ENCODE measurements at regions of chr3 and their contacts with region 1.

Region 1: DNA sequence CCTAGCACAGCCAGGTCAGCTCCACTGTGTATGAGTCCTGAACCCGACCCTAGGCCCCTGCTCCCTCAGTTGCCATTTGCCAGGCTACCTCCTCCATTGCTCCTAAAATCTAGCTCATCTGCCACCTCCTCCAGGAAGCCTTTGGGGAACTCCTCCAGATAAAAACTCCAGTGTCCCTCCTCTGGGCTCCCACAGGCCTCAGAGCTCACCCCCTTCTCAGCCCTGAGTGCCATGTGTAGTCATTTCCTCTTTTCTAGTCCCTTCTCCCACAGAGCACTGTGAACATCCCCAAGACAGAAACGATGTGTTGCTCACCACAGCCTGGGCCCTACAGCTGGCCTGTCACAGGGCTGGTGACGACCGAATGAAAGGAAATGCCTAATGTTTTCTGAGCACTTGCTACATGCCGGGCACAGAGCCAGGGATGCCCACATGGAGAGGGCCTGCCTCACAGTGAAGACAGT is 61.0 kb downstream of the IQSEC1 start:
- DNase-seq: peak; percentile 77
- H3K4me3 ChIP-seq: peak overlapping the region; percentile 6
- H3K27ac ChIP-seq: peak overlapping the region; percentile 97
- H3K4me1 ChIP-seq: peaks cover 99% of the 10 kb centered on the region
- CTCF ChIP-seq: no peak

Region 2: DNA sequence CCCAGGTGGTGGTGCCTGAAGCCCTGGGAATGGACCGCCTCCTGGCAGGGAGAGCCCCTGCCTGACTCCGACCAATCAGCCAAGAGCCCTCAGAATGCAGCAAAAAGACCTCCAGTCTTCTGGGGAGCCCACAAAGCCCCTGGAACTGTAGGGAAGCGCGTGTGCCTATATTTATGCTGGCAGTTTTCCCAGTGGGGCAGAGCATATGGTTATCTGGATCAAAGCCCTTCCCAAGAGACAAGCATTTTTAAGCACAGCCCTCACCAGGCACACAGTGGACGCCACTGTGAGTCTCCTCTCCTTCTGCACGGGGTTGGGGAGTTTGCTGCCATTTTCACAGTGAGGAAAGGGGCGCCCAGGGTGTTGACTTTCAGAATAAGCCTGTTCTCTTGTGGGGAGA is 90.0 kb before region 1 on chr3:
- CTCF ChIA-PET with region 1: no interaction called
- POLR2A ChIA-PET with region 1: no interaction called
- intact Hi-C with region 1: no loop called
- DNase-seq: no peak
- H3K4me3 ChIP-seq: no peak overlapping the region
- H3K27ac ChIP-seq: no peak overlapping the region
- H3K4me1 ChIP-seq: peaks cover 16% of the 10 kb centered on the region
- CTCF ChIP-seq: no peak

Region 3: DNA sequence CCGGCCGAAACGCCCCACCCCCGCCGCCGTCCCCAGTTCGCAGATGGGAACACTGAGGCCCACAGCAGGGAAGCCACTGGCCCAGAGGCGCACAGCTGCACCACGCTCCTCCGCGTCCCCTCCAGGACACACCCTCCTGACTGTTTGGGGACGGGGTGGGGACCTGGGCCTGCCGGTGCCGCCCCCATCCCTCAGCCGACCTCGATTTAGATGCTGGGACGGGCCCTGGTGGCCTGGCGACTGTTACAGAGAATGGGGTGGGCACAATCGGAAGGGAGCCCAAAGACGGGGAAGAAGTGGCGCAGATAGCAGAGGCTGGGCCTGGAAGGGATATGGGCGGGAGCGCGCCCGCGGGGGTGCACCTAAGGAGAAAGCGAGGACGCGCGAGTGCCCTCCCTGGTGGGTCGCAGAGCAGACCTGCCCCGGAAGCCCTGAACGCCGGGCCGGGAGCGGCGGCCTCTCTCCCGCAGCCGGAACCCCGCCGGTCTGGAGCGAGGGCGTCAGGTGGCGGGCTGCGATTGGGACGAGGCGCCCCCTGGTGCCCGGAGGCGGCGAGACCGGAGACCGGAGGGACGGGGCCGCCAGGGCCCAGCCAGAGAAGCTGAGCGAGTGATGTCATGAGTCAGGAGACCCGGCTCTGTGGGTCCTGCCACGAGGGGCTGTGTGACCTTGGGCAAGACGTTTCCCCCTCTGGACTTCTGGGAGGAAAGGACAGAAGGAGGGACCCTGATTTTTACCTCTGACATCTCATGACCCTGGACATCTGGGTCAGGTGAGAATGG is 17.5 kb before region 1 on chr3:
- CTCF ChIA-PET with region 1: interaction called, 4 read pairs
- POLR2A ChIA-PET with region 1: interaction called, 10 read pairs
- intact Hi-C with region 1: loop called (anchors 2 kb)
- DNase-seq: peak; percentile 84
- H3K4me3 ChIP-seq: peak overlapping the region; percentile 69
- H3K27ac ChIP-seq: peak overlapping the region; percentile 4
- H3K4me1 ChIP-seq: peaks cover 48% of the 10 kb centered on the region
- CTCF ChIP-seq: peak; percentile 92

Region 4: DNA sequence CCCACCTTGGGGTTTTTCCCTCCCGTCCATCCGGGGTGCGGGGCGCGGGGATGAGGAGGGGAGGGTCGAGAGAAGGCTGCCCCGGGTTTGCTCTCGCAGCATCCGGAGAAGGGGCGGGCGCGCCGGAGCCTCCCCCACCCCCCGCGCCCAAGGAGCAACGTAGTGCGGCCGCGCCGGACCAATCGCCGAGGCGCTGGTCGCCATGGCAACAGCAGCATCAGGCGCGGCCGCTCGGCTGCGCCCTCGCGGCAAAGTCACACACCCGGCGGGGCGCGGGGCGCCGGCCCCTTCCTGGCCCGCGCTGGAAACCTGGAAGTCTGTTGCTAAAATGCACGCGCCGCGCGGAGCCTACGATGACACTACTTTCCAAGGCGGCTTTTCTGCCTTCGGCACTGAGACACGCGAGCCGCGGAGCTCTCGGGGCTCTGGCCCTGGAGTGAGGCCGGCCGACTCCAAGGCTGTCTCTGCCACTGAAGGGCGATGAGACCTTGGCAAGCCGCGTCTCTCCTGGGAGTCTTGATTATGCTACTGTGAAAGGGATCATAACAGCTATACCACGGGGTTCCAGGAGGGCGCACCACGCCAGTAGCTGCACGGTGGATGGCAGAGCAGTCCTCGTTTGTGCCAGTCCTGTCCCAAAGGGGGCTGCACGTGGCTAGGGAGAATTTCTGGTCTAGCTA is 61.2 kb after region 1 on chr3 and contains the start of gene IQSEC1:
- CTCF ChIA-PET with region 1: interaction called, 5 read pairs
- POLR2A ChIA-PET with region 1: interaction called, 34 read pairs
- intact Hi-C with region 1: loop called (anchors 1 kb)
- DNase-seq: peak; percentile 93
- H3K4me3 ChIP-seq: peak within 1 kb of the TSS; percentile 77
- H3K27ac ChIP-seq: peak within 1 kb of the TSS; percentile 78
- H3K4me1 ChIP-seq: peaks cover 87% of the 10 kb centered on the region
- CTCF ChIP-seq: peak; percentile 38; the same call in 1 of the 2 replicates
- total RNA-seq, gene IQSEC1: 24.3 and 25.2 TPM in 2 replicates

Region 5: GRCh38 chr3:13332158-13332557 is 319.9 kb after region 1 on chr3:
- CTCF ChIA-PET with region 1: no interaction called
- POLR2A ChIA-PET with region 1: no interaction called
- intact Hi-C with region 1: loop called (anchors 5 kb)
- DNase-seq: peak; percentile 98
- H3K4me3 ChIP-seq: peak overlapping the region; percentile 50
- H3K27ac ChIP-seq: peak overlapping the region; percentile 95
- H3K4me1 ChIP-seq: peaks cover 91% of the 10 kb centered on the region
- CTCF ChIP-seq: no peak

Region 6: GRCh38 chr3:14688525-14688924 is 1676.3 kb after region 1 on chr3:
- CTCF ChIA-PET with region 1: no interaction called
- POLR2A ChIA-PET with region 1: no interaction called
- intact Hi-C with region 1: loop called (anchors 10 kb)
- DNase-seq: peak; percentile 77
- H3K4me3 ChIP-seq: peak overlapping the region; percentile 55
- H3K27ac ChIP-seq: peak overlapping the region; percentile 91
- H3K4me1 ChIP-seq: peaks cover 77% of the 10 kb centered on the region
- CTCF ChIP-seq: no peak